K562 (cell line): ENCODE measurements at regions of chr13 and their contacts with region 1.

Region 1: GRCh38 chr13:69566104-69566716 is 541.4 kb upstream of the ATXN8OS start:
- DNase-seq: no peak
- ATAC-seq: no peak
- H3K4me3 ChIP-seq: no peak overlapping the region
- H3K27ac ChIP-seq: no peak overlapping the region
- H3K4me1 ChIP-seq: no peaks in the 10 kb centered on the region
- H3K27me3 ChIP-seq: no peaks in the 10 kb centered on the region
- CTCF ChIP-seq: no peak
- EP300 ChIP-seq: no peak
- POLR2A ChIP-seq: no peak
- RAD21 ChIP-seq: no peak

Region 2: GRCh38 chr13:70448820-70449219 is 882.6 kb after region 1 on chr13:
- CTCF ChIA-PET with region 1: interaction called, 10 read pairs
- POLR2A ChIA-PET with region 1: no interaction called
- in situ Hi-C with region 1: no loop called
- intact Hi-C with region 1: no loop called
- DNase-seq: no peak
- ATAC-seq: no peak
- H3K4me3 ChIP-seq: no peak overlapping the region
- H3K27ac ChIP-seq: no peak overlapping the region
- H3K4me1 ChIP-seq: no peaks in the 10 kb centered on the region
- H3K27me3 ChIP-seq: no peaks in the 10 kb centered on the region
- CTCF ChIP-seq: no peak
- EP300 ChIP-seq: no peak
- POLR2A ChIP-seq: no peak
- RAD21 ChIP-seq: no peak